Colonic mucosa (tissue), 4 donors: ENCODE measurements at regions of chr19 and their contacts with region 1.

Region 1: GRCh38 chr19:15264061-15264932 is 32.0 kb upstream of the EPHX3 start:
- DNase-seq: peak; percentile 77
- H3K4me3 ChIP-seq: no peak overlapping the region
- H3K27ac ChIP-seq: peak overlapping the region; percentile 24
- H3K4me1 ChIP-seq: no peaks in the 10 kb centered on the region
- H3K27me3 ChIP-seq: no peaks in the 10 kb centered on the region
- CTCF ChIP-seq: peak; percentile 69

Region 2: DNA sequence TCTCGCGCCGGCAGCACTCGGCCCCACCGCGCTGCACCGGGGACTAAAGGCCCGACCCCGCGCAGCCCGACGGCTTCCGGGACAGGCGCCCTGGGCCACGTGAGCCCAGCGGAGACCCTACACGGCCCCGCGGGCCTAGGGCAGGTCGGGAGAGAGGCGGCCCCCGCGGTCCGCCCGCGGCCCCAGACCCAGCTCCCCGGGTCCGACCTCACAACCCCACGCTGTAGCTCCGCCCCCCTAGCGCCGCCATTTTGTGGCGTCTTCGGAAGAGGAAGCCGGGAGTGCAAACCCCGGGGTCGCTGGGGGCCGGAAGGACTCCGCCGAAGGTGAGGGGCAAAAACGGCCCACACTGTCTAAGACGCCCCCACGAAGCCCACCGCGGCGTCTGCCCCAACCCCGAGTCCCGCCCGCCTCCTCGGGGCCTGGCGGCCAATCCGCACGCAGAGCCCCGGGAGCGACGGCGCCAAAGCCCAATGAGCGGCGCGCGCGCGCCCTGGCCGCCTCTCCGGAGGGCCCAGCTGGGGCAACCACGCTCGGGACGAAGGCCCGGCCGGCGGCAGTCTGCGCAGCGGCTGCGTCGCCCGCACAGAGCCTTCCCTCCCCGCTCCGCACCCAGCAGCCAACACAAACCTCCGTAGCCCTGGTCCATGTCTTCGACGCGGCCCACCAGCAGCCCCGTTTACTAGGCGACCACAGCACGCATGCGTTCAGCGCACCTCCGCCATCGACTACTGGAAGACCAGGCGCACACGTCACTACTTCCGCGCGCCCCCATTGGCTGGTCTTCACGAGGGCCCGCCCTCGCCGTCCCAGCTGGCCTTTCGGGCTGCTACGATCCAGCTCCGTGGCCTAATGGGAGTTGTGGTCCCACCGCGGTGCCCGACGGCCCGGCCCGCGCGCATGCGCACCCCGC is 115.0 kb after region 1 on chr19 and contains the start of gene AKAP8:
- intact Hi-C with region 1: loop called (anchors 10 kb)
- DNase-seq: peak; percentile 97
- H3K4me3 ChIP-seq: peak within 1 kb of the TSS; percentile 94
- H3K27ac ChIP-seq: peak within 1 kb of the TSS; percentile 92
- H3K4me1 ChIP-seq: no peaks in the 10 kb centered on the region
- H3K27me3 ChIP-seq: no peaks in the 10 kb centered on the region
- CTCF ChIP-seq: no peak
- total RNA-seq, gene AKAP8: 37.0 to 55.2 TPM